Lower leg skin (tissue), 4 donors: ENCODE measurements at regions of chr7 and their contacts with region 1.

Region 1: GRCh38 chr7:55280031-55280454 is 85.1 kb upstream of the LANCL2 start:
- DNase-seq: peak; percentile 57 to 75
- H3K4me3 ChIP-seq: no peak overlapping the region
- CTCF ChIP-seq: peak in 1 of 3 donors; percentile 63
- POLR2A ChIP-seq: no peak

Region 2: DNA sequence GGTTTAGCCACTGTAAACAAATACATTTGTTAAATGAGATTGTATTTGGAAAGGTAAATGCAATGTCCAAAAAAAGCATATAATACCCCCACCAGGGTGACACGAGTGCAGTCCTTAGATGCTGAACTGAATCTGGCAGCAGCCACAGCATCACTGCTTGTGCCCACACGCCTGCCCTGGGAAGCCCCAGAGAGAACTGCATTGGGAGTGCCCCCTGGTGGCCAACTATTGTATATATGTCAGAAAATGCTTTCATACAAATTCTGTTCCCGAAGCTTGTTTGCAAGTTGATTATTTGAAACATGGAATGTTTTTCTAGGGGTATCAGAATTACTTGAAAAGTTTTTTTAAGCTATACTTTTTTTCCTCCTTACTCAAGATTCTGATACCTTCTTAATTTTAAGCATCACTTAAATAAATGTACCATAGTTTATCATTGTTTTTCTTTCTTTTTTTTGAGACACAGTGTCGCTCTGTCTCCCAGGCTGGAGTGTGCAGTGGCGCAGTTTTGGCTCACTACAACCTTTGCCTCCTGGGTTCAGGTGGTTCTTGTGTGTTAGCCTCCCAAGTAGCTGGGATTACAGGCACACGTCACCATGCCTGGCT is 135.2 kb after region 1 on chr7:
- intact Hi-C with region 1: loop called (anchors 5 kb)
- DNase-seq: peak; percentile 81 to 93
- H3K4me3 ChIP-seq: no peak overlapping the region
- CTCF ChIP-seq: no peak
- POLR2A ChIP-seq: no peak